Common myeloid progenitor, CD34-positive (primary cell): ENCODE measurements at regions of chr15 and their contacts with region 1.

Region 1: DNA sequence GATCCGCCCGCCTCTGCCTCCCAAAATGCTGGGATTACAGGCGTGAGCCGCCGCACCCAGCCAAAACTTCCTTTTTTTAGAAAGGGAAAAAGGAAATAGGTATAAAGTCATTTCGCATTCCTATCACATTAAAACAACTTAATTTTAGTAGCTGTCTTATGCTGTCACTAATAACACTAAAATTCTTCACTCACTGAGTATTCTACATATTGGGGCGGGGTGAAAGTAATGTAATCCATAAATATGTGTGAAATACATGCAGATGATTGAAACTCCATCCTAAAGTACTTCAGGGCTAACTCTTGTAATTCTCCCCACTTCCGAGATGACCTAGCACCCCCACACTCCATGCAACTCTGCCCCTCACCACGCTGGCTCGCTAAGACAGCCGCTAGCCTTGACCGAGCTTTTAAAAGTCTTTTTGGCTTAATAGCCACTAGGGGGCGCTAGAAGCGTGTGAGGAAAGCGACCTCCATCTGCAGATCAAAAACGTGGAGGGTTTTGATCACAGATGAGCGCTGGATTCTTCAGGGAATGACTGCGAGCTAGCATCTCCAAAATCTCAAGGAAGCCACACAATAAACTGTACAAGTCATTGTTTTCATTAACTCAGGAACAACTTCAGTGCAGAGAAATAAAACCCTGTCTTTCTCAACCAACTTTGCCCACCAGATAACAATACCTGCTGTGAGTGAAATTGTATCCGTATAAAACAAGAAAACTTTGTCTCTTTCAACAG is 129.3 kb upstream of the IGF1R start:
- DNase-seq: peak; percentile 80 to 85 (median 84)
- H3K4me3 ChIP-seq: peak overlapping the region in 1 of 7 experiments; percentile 33
- H3K27ac ChIP-seq: no peak overlapping the region
- H3K4me1 ChIP-seq: peaks cover 0 to 5% (median 3%) of the 10 kb centered on the region in 4 experiments
- H3K27me3 ChIP-seq: no peaks in the 10 kb centered on the region

Region 2: DNA sequence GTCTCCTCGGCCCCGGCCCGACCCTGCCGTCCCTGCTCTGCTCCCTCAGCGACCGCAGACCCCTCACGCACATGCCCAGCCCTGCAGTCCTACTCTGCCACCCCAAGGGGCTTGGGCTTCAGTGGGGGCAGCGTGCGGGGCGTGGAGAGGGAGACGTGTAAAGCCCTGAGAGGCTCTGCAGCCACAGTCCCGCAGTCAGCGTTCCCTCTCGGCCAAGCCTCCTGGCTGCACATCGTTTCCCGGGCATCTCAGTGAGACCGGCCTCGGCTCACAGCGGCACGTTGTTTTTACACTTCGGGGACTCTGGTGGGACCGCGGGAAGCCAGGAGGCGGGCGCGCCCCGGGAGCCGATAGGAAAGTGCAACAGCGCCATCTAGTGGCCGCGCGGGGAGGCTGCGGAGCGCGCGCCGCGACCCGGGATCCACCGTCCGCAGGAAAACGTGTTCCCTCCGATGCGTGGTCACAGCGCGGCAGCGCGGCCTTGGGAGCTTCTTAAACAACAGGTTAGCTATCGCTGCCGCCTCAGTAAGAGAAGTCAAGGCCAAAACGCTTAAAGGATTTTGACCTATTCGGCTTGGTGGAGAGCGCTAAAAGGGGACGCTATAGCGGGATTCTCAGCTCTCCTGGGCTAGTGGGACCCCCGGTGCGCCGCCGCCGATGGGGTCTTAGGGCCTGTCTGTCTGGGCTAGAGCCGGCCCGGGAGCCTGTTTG is 97.4 kb before region 1 on chr15:
- CTCF ChIA-PET with region 1: no interaction called
- POLR2A ChIA-PET with region 1: no interaction called
- DNase-seq: peak; percentile 50 to 67 (median 65)
- H3K4me3 ChIP-seq: peak overlapping the region in 4 of 7 experiments; percentile 19 to 56 (median 25)
- H3K27ac ChIP-seq: no peak overlapping the region
- H3K4me1 ChIP-seq: peaks cover 0 to 17% (median 11%) of the 10 kb centered on the region in 4 experiments
- H3K27me3 ChIP-seq: peaks cover 0 to 81% (median 35%) of the 10 kb centered on the region in 5 experiments

Region 3: GRCh38 chr15:98505581-98506031 is 13.4 kb before region 1 on chr15:
- CTCF ChIA-PET with region 1: interaction called, 16 read pairs
- POLR2A ChIA-PET with region 1: no interaction called
- DNase-seq: peak in 2 of 3 donors; percentile 14 to 22
- H3K4me3 ChIP-seq: no peak overlapping the region
- H3K27ac ChIP-seq: no peak overlapping the region
- H3K4me1 ChIP-seq: peaks cover 9 to 30% (median 28%) of the 10 kb centered on the region in 4 experiments
- H3K27me3 ChIP-seq: no peaks in the 10 kb centered on the region

Region 4: GRCh38 chr15:98529205-98530145 is 10.5 kb after region 1 on chr15:
- CTCF ChIA-PET with region 1: interaction called, 11 read pairs
- POLR2A ChIA-PET with region 1: no interaction called
- DNase-seq: no peak
- H3K4me3 ChIP-seq: no peak overlapping the region
- H3K27ac ChIP-seq: no peak overlapping the region
- H3K4me1 ChIP-seq: peaks cover 0 to 15% (median 6%) of the 10 kb centered on the region in 4 experiments
- H3K27me3 ChIP-seq: peaks cover 0 to 1% (median 0%) of the 10 kb centered on the region in 5 experiments

Region 5: GRCh38 chr15:98548154-98548971 is 29.4 kb after region 1 on chr15:
- CTCF ChIA-PET with region 1: interaction called, 10 read pairs
- POLR2A ChIA-PET with region 1: no interaction called
- DNase-seq: peak; percentile 25 to 73 (median 68)
- H3K4me3 ChIP-seq: peak overlapping the region; percentile 11 to 73 (median 62)
- H3K27ac ChIP-seq: no peak overlapping the region
- H3K4me1 ChIP-seq: peaks cover 5 to 18% (median 16%) of the 10 kb centered on the region in 4 experiments
- H3K27me3 ChIP-seq: peaks cover 0 to 25% (median 6%) of the 10 kb centered on the region in 5 experiments

Region 6: DNA sequence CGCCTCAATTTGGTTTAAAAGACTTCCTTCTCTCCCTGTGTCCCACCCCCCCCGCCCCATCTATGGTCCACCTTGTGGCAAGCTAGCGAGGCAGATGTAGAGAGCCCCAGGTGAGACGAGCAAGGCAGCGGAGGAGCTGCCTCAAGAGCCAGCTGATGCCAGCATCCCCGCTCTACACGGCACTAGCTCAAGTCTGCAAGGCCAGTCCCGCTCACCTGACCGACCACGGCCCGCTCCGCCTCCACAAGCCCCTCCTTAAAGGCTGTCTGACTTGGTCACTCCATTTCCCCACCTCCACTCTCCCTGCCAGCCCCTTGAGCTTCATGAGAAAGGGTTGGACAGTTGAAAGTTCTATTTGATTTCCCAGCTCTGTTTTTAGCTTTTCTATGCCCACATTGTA is 73.1 kb after region 1 on chr15:
- CTCF ChIA-PET with region 1: no interaction called
- POLR2A ChIA-PET with region 1: no interaction called
- DNase-seq: no peak
- H3K4me3 ChIP-seq: no peak overlapping the region
- H3K27ac ChIP-seq: no peak overlapping the region
- H3K4me1 ChIP-seq: no peaks in the 10 kb centered on the region
- H3K27me3 ChIP-seq: peaks cover 0 to 8% (median 2%) of the 10 kb centered on the region in 5 experiments

Region 7: DNA sequence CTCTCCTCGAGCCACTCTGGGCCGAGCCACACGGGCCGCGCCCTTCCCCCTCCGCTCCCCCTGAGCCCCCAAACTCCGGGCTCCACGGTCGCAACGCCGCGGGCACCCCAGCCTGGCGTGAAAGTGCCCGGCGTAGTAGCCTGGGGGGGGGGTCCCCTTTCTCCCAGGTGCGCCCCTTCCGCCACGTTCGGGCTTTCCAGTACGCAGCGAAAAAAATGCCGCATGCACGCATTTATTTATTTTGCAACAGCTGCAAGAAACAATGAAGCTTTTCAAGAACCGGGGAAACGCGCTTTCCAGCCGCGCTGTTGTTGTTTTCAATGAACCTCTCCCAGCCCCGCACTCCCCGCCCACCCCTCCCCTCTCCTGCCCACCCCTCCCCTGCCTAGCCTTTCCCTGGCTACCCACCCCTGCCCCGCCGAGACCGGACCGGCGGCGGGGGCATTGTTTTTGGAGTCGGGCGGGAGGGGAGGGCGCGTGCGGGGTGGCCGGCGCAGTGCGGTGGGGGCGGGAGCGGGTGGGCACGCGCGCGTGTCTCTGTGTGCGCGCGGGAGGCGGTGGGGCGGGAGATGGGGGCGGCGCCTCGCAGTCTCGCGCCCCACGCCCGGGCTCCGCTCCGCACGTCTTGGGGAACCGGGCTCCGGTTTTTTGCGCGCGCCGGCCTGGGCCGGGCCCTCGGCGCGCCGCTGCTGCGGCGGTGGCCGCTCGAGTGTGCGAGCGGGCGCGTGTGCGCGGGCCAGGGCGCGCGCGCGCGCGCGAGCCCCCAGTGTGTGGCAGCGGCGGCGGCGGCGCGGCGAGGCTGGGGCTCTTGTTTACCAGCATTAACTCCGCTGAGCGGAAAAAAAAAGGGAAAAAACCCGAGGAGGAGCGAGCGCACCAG is 129.0 kb after region 1 on chr15 and contains the start of gene IGF1R:
- CTCF ChIA-PET with region 1: interaction called, 11 read pairs
- POLR2A ChIA-PET with region 1: no interaction called
- DNase-seq: peak; percentile 89 to 95 (median 95)
- H3K4me3 ChIP-seq: peak within 1 kb of the TSS; percentile 75 to 95 (median 89)
- H3K27ac ChIP-seq: peak within 1 kb of the TSS in 1 of 2 experiments; percentile 58
- H3K4me1 ChIP-seq: peaks cover 10 to 38% (median 31%) of the 10 kb centered on the region in 4 experiments
- H3K27me3 ChIP-seq: peaks cover 0 to 30% (median 17%) of the 10 kb centered on the region in 5 experiments

Region 8: DNA sequence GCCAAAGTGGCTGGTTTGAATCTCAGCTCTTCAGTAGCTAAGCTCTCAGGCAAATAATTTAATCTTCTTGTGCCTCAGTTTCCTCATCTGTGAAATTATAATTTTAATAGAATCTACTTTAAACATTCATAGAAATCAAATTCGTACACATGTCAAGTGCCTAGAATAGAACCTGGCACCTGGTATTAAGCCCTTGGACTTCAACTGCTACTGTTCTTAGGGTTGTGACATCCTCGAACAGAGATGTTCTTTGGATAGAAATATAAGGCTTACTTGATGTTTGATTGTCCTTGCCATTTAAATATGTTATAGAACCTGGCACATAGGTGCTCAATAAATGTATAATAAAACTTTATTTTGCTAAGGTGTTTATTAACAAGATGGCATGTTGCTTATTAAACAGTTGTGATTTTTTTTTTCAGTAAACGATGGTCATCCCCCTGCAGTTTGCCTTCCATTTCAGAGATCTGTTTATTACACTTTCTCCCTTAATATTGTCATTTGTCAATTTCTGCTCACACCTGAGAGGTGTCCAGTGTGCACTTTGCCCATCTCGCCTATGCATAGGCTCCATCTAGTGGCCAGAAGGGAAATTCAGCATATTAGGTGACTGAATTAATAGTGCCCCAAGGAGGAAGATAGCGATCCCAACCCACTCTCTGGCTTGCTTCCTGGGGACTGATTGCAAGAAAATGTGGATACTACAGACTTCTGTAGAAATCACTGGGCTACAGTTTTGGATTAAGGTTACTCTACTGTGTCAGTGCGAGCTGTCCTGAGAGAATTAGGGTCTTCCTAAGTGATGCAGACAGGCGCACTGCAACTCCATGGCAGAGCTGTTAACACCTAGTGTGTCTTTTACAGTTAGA is 140.1 kb after region 1 on chr15:
- CTCF ChIA-PET with region 1: interaction called, 68 read pairs
- POLR2A ChIA-PET with region 1: no interaction called
- DNase-seq: peak; percentile 44 to 53 (median 49)
- H3K4me3 ChIP-seq: no peak overlapping the region
- H3K27ac ChIP-seq: no peak overlapping the region
- H3K4me1 ChIP-seq: peaks cover 0 to 4% (median 1%) of the 10 kb centered on the region in 4 experiments
- H3K27me3 ChIP-seq: no peaks in the 10 kb centered on the region

Region 9: DNA sequence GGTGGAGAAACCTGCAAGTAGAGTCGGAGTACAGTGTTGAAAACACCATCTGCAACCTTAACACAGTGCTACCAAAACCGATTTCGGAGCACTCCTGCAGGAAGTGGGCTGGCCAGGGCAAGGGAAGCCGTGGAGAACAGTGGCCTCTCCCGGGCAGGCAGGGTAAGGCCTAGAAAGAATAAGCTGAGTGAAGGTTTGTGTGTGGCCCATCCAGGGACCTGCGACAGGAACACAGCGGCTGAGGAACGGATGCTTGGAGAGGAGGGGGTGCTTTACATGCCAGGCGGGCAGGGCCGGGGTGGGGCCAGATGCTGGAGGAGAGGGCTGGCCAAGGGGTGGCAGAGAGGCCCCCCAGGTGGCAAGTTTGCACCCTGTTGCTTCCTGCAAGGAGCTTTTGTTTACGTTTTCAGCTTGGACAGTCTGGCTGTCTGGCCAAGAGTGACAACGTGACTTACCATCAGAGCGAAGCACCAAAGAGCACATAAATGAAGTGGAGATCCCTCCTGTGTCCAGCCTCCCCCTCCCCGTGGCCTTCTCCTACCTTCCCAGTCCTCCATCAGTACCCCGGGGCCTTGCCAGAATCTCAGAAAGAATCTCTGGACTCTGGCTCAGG is 332.1 kb after region 1 on chr15:
- CTCF ChIA-PET with region 1: interaction called, 12 read pairs
- POLR2A ChIA-PET with region 1: no interaction called
- DNase-seq: peak; percentile 76 to 90 (median 89)
- H3K4me3 ChIP-seq: peak overlapping the region in 4 of 7 experiments; percentile 73 to 91 (median 84)
- H3K27ac ChIP-seq: no peak overlapping the region
- H3K4me1 ChIP-seq: peaks cover 12 to 36% (median 32%) of the 10 kb centered on the region in 4 experiments
- H3K27me3 ChIP-seq: no peaks in the 10 kb centered on the region